ENCODE measurements at regions of chr12 and their contacts with region 1.

Region 1: DNA sequence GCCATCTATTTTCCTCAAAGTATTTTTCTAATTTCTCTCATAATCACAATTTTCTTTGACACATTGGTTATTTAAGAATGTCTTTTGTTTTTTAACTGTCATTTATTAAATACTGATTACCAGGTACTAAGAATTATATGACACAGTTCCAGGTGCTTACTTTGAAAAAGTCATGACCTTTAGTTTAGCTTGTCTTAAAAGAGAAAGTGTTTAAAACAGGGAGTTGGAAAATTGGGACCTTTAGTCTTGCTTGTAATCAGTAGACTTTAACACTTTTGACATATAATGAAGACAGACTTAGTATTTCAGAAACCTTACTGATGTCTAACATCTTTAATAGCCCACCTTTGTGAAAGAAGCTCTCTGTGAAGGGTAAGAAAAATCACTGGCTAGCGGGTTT is 19.2 kb downstream of the CREBL2 start:
- DNase-seq: no peak
- H3K4me3 ChIP-seq: no peak overlapping the region
- H3K27ac ChIP-seq: no peak overlapping the region
- H3K4me1 ChIP-seq: peaks cover 0 to 3% (median 0%) of the 10 kb centered on the region in 4 experiments
- H3K27me3 ChIP-seq: no peaks in the 10 kb centered on the region

Region 2: GRCh38 chr12:12503384-12504078 is 127.3 kb before region 1 on chr12:
- CTCF ChIA-PET with region 1: no interaction called
- POLR2A ChIA-PET with region 1: no interaction called
- DNase-seq: no peak
- H3K4me3 ChIP-seq: no peak overlapping the region
- H3K27ac ChIP-seq: no peak overlapping the region
- H3K4me1 ChIP-seq: no peaks in the 10 kb centered on the region
- H3K27me3 ChIP-seq: no peaks in the 10 kb centered on the region

Region 3: GRCh38 chr12:12645485-12645884 is 14.6 kb after region 1 on chr12:
- CTCF ChIA-PET with region 1: interaction called, 24 read pairs
- POLR2A ChIA-PET with region 1: interaction called, 4 read pairs
- DNase-seq: peak; percentile 57 to 75 (median 74)
- H3K4me3 ChIP-seq: no peak overlapping the region
- H3K27ac ChIP-seq: no peak overlapping the region
- H3K4me1 ChIP-seq: no peaks in the 10 kb centered on the region
- H3K27me3 ChIP-seq: no peaks in the 10 kb centered on the region